GM12878 (cell line): ENCODE measurements at regions of chr4 and their contacts with region 1.

Region 1: GRCh38 chr4:150242820-150243458 is 164.7 kb downstream of the DCLK2 start:
- DNase-seq: no peak
- ATAC-seq: peak; percentile 65
- H3K4me3 ChIP-seq: no peak overlapping the region
- H3K27ac ChIP-seq: no peak overlapping the region
- H3K4me1 ChIP-seq: no peaks in the 10 kb centered on the region
- H3K27me3 ChIP-seq: no peaks in the 10 kb centered on the region
- CTCF ChIP-seq: peak; percentile 82 to 89 (median 84)
- EP300 ChIP-seq: no peak
- POLR2A ChIP-seq: no peak
- RAD21 ChIP-seq: peak; percentile 77

Region 2: DNA sequence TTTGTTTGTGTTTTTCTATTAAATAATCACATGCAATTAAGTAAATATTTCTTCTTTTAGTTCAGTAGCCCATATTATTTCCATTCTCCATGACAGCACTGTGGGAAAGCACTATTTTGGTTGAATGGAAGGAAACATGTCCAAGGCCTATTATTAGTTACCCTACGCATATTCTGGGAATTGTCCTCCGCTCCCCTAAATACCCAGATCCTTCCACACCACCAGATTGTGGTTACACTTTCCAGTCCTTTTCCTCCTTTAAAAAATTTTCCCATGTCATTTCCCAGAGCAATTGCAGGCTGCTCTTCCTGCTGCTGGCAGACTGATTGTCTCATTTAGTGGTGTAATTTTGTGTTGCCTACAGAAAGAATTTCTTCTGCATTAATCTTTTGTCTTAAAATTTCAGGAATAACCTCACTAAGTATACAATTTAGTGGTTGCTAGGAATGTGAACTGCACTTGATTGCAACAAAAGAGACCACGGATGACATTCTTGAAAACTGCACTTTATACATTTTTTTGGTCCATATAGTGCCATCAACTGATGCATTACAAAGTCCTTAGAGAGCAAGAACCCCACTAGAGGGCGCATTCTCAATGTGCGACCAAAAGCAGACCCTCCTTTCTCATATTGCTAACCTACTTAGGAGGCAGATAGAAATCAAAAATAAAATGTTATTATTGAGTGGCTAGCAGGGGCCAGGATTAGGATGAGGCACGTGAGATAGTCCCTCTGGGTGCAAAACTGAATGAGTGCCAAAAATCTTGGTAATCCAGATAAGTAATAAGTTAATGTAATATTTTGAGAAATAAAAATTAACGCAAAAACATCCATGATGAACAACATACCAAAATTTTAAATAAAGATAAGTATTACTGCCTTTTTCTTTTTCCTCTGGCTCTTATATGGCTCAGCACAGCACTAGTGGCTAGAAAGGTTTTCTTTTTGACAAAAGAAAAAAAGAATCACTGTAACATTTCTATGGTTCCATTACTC is 328.5 kb before region 1 on chr4:
- CTCF ChIA-PET with region 1: no interaction called
- POLR2A ChIA-PET with region 1: no interaction called
- RAD21 ChIA-PET with region 1: no interaction called
- SMC1A ChIA-PET with region 1: no interaction called
- in situ Hi-C with region 1: no loop called
- intact Hi-C with region 1: loop called (anchors 1 kb)
- DNase-seq: no peak
- ATAC-seq: peak; percentile 89
- H3K4me3 ChIP-seq: no peak overlapping the region
- H3K27ac ChIP-seq: no peak overlapping the region
- H3K4me1 ChIP-seq: no peaks in the 10 kb centered on the region
- H3K27me3 ChIP-seq: no peaks in the 10 kb centered on the region
- CTCF ChIP-seq: peak; percentile 53 to 75 (median 72)
- EP300 ChIP-seq: no peak
- POLR2A ChIP-seq: no peak
- RAD21 ChIP-seq: peak; percentile 33; the same call in 1 of the 2 replicates

Region 3: GRCh38 chr4:149980941-149981340 is 262.0 kb before region 1 on chr4:
- CTCF ChIA-PET with region 1: interaction called, 12 read pairs
- POLR2A ChIA-PET with region 1: no interaction called
- RAD21 ChIA-PET with region 1: no interaction called
- SMC1A ChIA-PET with region 1: interaction called, 6 read pairs
- in situ Hi-C with region 1: no loop called
- intact Hi-C with region 1: loop called (anchors 1 kb)
- DNase-seq: no peak
- ATAC-seq: peak; percentile 83
- H3K4me3 ChIP-seq: no peak overlapping the region
- H3K27ac ChIP-seq: no peak overlapping the region
- H3K4me1 ChIP-seq: no peaks in the 10 kb centered on the region
- H3K27me3 ChIP-seq: no peaks in the 10 kb centered on the region; a peak in 1 of 4 replicates
- CTCF ChIP-seq: peak; percentile 73 to 78 (median 75)
- EP300 ChIP-seq: no peak
- POLR2A ChIP-seq: no peak
- RAD21 ChIP-seq: peak; percentile 70

Region 4: GRCh38 chr4:149999485-150000074 is 243.4 kb before region 1 on chr4:
- CTCF ChIA-PET with region 1: interaction called, 20 read pairs
- POLR2A ChIA-PET with region 1: no interaction called
- RAD21 ChIA-PET with region 1: interaction called, 3 read pairs
- SMC1A ChIA-PET with region 1: interaction called, 7 read pairs
- in situ Hi-C with region 1: no loop called
- intact Hi-C with region 1: loop called (anchors 1 kb)
- DNase-seq: no peak
- ATAC-seq: peak; percentile 63
- H3K4me3 ChIP-seq: no peak overlapping the region
- H3K27ac ChIP-seq: no peak overlapping the region
- H3K4me1 ChIP-seq: no peaks in the 10 kb centered on the region
- H3K27me3 ChIP-seq: no peaks in the 10 kb centered on the region
- CTCF ChIP-seq: peak; percentile 57 to 70 (median 61)
- EP300 ChIP-seq: no peak
- POLR2A ChIP-seq: no peak
- RAD21 ChIP-seq: peak; percentile 81

Region 5: DNA sequence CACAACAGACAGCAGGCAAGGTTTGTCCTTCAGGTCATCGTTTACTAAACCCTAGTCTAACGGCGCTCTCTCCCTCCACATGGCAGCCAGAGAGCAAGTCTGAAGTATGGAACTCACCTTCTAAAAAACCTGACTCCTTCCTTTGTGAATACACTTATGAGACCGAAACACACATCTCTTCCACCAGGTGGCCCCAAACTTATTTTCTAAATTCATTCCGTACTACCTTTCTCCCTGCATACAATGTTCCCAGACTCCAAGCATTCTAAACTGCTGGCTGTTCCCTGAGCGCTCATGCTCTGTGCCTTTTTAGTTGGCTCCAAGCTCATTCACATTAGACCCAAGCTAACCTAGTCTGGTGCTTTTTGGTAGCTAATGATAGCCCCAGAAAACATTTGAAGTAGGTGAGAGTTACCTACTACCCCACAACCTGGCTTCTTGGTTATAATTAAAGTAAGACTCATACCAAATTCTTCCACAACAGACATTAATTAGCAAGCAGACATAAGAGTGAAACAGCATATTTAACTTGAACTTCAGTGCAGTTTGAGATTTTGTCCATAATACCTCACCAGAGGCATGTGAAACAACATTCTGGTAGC is 232.3 kb before region 1 on chr4:
- CTCF ChIA-PET with region 1: interaction called, 23 read pairs
- POLR2A ChIA-PET with region 1: no interaction called
- RAD21 ChIA-PET with region 1: no interaction called
- SMC1A ChIA-PET with region 1: interaction called, 7 read pairs
- in situ Hi-C with region 1: no loop called
- intact Hi-C with region 1: loop called (anchors 5 kb)
- DNase-seq: no peak
- ATAC-seq: peak; percentile 78
- H3K4me3 ChIP-seq: no peak overlapping the region
- H3K27ac ChIP-seq: no peak overlapping the region
- H3K4me1 ChIP-seq: no peaks in the 10 kb centered on the region
- H3K27me3 ChIP-seq: peaks cover 0 to 4% of the 10 kb centered on the region in 2 experiments; a peak in 1 of 4 replicates
- CTCF ChIP-seq: peak; percentile 38 to 49 (median 46); a peak in 4 of 6 replicates
- EP300 ChIP-seq: no peak
- POLR2A ChIP-seq: no peak
- RAD21 ChIP-seq: peak; percentile 71

Region 6: GRCh38 chr4:150305995-150306394 is 63.1 kb after region 1 on chr4:
- CTCF ChIA-PET with region 1: no interaction called
- POLR2A ChIA-PET with region 1: no interaction called
- RAD21 ChIA-PET with region 1: no interaction called
- SMC1A ChIA-PET with region 1: no interaction called
- in situ Hi-C with region 1: no loop called
- intact Hi-C with region 1: no loop called
- DNase-seq: no peak
- ATAC-seq: no peak
- H3K4me3 ChIP-seq: no peak overlapping the region
- H3K27ac ChIP-seq: no peak overlapping the region
- H3K4me1 ChIP-seq: no peaks in the 10 kb centered on the region
- H3K27me3 ChIP-seq: no peaks in the 10 kb centered on the region
- CTCF ChIP-seq: no peak
- EP300 ChIP-seq: no peak
- POLR2A ChIP-seq: no peak
- RAD21 ChIP-seq: no peak

Region 7: DNA sequence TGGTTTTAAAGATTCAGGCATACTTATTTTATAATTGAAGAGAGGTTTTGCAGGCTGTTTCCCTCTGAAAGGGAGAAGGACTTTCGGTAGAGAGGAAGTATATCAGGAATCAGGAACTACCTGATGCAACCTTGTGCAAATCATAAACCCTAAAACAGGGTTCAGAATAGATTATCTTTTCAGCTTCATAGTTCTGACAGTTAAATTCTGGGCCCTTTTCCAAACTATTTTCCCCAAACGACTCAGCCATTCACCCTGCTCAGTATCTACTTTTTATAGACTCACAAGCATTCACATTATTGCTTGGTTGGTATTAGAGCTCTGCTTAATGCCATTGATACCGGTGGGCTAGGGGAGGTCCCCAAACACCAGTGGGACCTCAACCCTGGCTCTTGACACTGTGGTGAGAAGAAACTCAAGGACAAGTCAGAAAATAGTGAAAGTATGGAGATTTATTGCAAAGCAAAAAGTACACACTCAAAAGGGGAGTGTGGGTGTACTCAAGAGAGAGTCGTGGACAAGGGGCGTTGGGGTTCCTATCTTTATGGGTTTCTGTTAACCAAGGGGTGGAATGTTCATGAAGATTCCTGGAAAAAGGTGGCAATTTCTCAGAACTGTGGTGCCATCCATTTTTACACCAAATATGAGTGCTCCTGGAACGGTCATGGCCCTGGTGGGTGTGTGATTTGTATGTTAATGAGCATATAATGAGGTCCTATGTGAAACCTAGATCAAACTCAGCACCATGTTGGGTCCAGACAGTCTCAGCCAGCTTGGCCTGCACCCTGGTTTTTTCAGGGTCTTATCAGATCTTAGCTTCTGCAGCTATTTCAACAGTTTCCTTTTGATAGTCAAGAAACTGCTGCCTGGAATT is 73.6 kb after region 1 on chr4:
- CTCF ChIA-PET with region 1: no interaction called
- POLR2A ChIA-PET with region 1: no interaction called
- RAD21 ChIA-PET with region 1: no interaction called
- SMC1A ChIA-PET with region 1: no interaction called
- in situ Hi-C with region 1: no loop called
- intact Hi-C with region 1: no loop called
- DNase-seq: no peak
- ATAC-seq: no peak
- H3K4me3 ChIP-seq: no peak overlapping the region
- H3K27ac ChIP-seq: no peak overlapping the region
- H3K4me1 ChIP-seq: no peaks in the 10 kb centered on the region
- H3K27me3 ChIP-seq: no peaks in the 10 kb centered on the region
- CTCF ChIP-seq: no peak
- EP300 ChIP-seq: no peak
- POLR2A ChIP-seq: no peak
- RAD21 ChIP-seq: no peak